Activated B cell treated with CpG ODN at 0.5 μM for 24 hours (primary cell): ENCODE measurements at regions of chr17 and their contacts with region 1.

Region 1: DNA sequence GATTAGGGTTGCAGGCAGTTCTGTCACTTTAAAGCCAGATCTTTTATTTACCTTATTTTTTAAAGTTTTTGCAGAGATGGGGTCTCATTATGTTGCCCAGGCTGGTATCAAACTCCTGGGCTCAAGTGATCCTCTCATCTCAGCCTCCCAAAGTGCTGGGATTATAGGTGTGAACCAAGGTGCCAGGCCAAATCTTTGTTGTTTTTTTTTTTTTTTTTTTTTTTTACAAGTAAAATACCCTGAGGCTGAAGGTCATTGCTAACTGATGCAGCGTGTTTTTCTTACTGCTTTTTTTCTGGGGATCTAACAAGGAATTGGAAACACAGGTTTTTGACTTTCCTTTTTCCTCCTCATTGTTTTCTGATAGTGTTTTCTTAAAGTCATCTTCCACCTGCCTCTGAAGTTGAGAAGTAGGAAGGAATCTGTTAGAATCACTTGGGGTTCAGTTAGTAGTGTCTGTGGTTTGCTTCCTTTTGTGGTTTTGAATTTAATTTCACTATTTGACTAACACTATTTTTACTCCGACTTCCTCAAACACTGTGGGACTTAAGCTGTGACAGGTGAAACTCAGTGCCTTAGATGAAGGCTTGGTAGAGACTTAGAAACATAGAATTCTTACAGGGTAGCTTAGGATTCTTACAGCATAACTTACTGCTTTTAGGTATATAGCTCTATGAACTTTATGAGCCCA is 22.2 kb downstream of the CLTC start:
- DNase-seq: no peak
- ATAC-seq: peak; percentile 84
- H3K4me3 Mint-ChIP-seq: peak overlapping the region; percentile 73
- H3K27ac Mint-ChIP-seq: peak overlapping the region; percentile 88
- H3K4me1 Mint-ChIP-seq: peaks cover 74% of the 10 kb centered on the region
- H3K27me3 Mint-ChIP-seq: no peaks in the 10 kb centered on the region
- CTCF ChIP-seq: no peak

Region 2: DNA sequence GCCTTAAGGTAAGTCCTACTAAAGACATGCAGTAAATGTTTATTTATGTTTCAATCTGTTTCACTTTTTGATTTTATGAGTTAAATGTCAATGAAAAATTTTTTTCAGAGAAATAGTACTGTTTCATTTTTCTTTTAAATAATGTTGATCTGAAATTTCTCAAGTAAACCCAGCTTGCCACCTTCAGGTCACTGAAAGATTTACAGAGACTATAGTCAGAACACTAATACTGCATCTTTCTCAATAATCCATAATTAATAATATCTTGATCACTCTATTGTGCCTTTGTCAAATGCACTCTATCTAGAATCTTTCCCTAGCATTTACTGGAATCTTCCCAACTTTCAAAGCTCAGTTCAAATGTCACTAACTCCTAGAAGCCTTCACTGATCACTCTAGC is 83.0 kb before region 1 on chr17:
- CTCF ChIA-PET with region 1: no interaction called
- POLR2A ChIA-PET with region 1: no interaction called
- intact Hi-C with region 1: no loop called
- DNase-seq: no peak
- ATAC-seq: no peak
- H3K4me3 Mint-ChIP-seq: no peak overlapping the region
- H3K27ac Mint-ChIP-seq: no peak overlapping the region
- H3K4me1 Mint-ChIP-seq: no peaks in the 10 kb centered on the region
- H3K27me3 Mint-ChIP-seq: peaks cover 3% of the 10 kb centered on the region
- CTCF ChIP-seq: no peak

Region 3: GRCh38 chr17:59668816-59669215 is 26.9 kb after region 1 on chr17:
- CTCF ChIA-PET with region 1: no interaction called
- POLR2A ChIA-PET with region 1: interaction called, 5 read pairs
- intact Hi-C with region 1: loop called (anchors 1 kb)
- DNase-seq: no peak
- ATAC-seq: peak; percentile 25
- H3K4me3 Mint-ChIP-seq: peak overlapping the region; percentile 24
- H3K27ac Mint-ChIP-seq: peak overlapping the region; percentile 66
- H3K4me1 Mint-ChIP-seq: peaks cover 50% of the 10 kb centered on the region
- H3K27me3 Mint-ChIP-seq: no peaks in the 10 kb centered on the region
- CTCF ChIP-seq: no peak

Region 4: GRCh38 chr17:60231234-60231633 is 589.3 kb after region 1 on chr17:
- CTCF ChIA-PET with region 1: no interaction called
- POLR2A ChIA-PET with region 1: no interaction called
- intact Hi-C with region 1: no loop called
- DNase-seq: no peak
- ATAC-seq: no peak
- H3K4me3 Mint-ChIP-seq: no peak overlapping the region
- H3K27ac Mint-ChIP-seq: no peak overlapping the region
- H3K4me1 Mint-ChIP-seq: no peaks in the 10 kb centered on the region
- H3K27me3 Mint-ChIP-seq: no peaks in the 10 kb centered on the region
- CTCF ChIP-seq: no peak